ENCODE measurements at regions of chr17 and their contacts with region 1.

Region 1: DNA sequence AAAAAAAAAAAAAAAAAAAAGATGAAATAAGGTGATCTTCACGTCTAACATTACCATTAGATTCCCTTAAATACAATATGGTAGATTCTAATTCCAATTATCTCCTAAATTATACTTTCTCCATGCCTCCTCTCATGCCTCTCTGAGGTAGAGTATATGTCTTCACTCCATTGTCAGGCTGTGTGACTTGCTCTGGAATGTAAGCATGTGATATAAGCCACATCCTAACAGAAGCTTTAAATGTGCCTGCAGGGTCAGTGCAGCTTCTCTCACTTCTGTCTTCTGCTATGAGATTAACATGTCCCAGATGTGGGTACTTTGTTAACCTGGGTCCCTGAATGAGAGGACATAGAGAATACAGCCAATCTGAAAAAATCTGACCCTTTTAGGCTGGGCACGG is 32.6 kb downstream of the MED13 start:
- DNase-seq: no peak
- H3K4me3 ChIP-seq: no peak overlapping the region
- H3K27ac ChIP-seq: no peak overlapping the region
- H3K4me1 ChIP-seq: no peaks in the 10 kb centered on the region
- H3K27me3 ChIP-seq: no peaks in the 10 kb centered on the region
- CTCF ChIP-seq: no peak

Region 2: DNA sequence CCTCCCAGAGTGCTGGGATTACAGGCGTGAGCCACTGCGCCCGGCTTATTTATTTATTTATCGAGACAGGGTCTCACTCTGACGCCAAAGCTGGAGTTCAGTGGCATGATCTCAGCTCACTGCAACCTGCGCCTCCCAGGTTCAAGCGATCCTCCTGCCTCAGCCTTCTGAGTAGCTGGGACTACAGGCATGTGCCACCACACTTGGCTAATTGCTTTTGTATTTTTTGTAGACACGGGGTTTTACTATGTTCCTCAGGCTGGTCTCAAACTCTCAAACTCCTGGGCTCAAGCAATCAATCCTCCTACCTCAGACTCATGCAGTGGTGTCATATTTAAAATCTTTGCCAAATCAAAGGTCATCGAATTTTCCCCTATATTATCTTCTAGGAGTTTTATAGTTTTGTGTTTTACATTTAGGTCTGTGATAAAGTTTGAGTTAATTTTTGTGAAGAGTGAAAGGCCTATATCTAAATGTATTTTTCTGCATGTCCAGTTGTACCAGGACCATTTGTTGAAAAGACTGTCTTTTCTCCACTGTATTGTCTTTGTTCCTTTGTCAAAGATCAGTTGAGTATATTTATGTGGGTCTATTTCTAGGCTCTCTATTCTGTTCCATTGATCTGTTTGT is 488.6 kb before region 1 on chr17:
- CTCF ChIA-PET with region 1: no interaction called
- POLR2A ChIA-PET with region 1: no interaction called
- intact Hi-C with region 1: no loop called
- DNase-seq: no peak
- H3K4me3 ChIP-seq: no peak overlapping the region
- H3K27ac ChIP-seq: no peak overlapping the region
- H3K4me1 ChIP-seq: no peaks in the 10 kb centered on the region
- H3K27me3 ChIP-seq: peaks cover 34% of the 10 kb centered on the region
- CTCF ChIP-seq: no peak

Region 3: GRCh38 chr17:62049299-62049698 is 16.8 kb after region 1 on chr17:
- CTCF ChIA-PET with region 1: no interaction called
- POLR2A ChIA-PET with region 1: interaction called, 11 read pairs
- intact Hi-C with region 1: no loop called
- DNase-seq: no peak
- H3K4me3 ChIP-seq: no peak overlapping the region
- H3K27ac ChIP-seq: no peak overlapping the region
- H3K4me1 ChIP-seq: no peaks in the 10 kb centered on the region
- H3K27me3 ChIP-seq: no peaks in the 10 kb centered on the region
- CTCF ChIP-seq: no peak

Measured in A673 (cell line).